CD4-positive, alpha-beta memory T cell (primary cell): ENCODE measurements at regions of chr1 and their contacts with region 1.

Region 1: GRCh38 chr1:183628537-183628936 is 7.0 kb downstream of the ARPC5 start:
- DNase-seq: no peak
- H3K4me3 ChIP-seq: no peak overlapping the region
- H3K4me3 Mint-ChIP-seq: peak overlapping the region in 5 of 8 donors; percentile 4 to 55 (median 27)
- H3K27ac ChIP-seq: no peak overlapping the region
- H3K27ac Mint-ChIP-seq: peak overlapping the region; percentile 31 to 89 (median 70)
- H3K4me1 ChIP-seq: peaks cover 65% of the 10 kb centered on the region
- H3K4me1 Mint-ChIP-seq: peaks cover 27 to 46% (median 36%) of the 10 kb centered on the region in 4 donors
- H3K27me3 ChIP-seq: no peaks in the 10 kb centered on the region
- H3K27me3 Mint-ChIP-seq: no peaks in the 10 kb centered on the region

Region 2: DNA sequence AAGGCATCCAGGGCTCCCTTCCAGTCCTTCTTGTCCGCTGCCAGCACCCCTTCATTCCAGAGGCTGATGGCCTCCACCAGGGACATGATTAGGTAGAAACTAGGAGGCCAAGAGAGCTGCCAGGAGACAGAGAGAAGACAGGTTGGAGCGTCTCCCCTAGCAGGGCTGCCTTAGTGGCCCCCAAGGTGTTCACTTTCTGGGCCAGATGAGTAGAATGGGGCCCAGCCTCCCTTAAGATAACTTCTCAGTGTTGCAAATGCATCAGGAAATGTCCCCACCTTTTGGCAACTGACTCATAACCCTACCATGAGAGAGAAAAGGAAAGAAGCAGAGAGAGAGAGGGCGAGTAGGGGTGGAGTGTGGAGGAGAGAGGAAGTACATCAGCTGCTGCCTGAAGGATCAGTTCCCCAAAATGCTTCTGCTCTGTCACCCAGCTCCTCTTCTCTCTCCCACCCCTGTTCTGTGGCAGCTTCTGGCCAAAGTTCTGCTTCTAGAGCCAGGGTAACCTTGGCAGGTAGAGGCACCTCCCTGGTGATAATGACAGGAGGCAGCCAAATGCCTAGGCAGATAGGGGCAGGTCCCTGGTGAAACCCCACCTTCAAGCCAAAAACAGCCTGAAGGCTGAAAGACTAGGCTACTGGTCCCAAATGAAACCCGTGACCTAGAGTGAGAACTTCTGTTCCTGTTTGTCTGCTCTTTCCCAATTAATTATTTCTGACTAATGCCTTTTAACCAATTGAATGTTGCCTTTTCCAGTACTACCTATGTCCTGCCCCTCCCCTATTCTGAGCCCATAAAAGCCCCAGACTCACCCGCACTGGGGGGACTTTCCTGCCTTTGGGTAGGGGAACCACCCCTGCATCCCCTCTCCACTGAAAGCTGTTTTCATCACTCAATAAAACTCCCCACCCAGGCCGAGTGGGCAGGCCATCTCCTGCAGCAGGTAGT is 38.0 kb before region 1 on chr1 and contains the start of gene NCF2:
- CTCF ChIA-PET with region 1: no interaction called
- POLR2A ChIA-PET with region 1: interaction called, 3 read pairs
- intact Hi-C with region 1: loop called (anchors 5 kb)
- DNase-seq: peak in 2 of 5 donors; percentile 7 to 37
- H3K4me3 ChIP-seq: no peak within 1 kb of the TSS
- H3K4me3 Mint-ChIP-seq: peak within 1 kb of the TSS in 6 of 8 donors; percentile 11 to 66 (median 54)
- H3K27ac ChIP-seq: peak within 1 kb of the TSS; percentile 50
- H3K27ac Mint-ChIP-seq: peak within 1 kb of the TSS; percentile 12 to 93 (median 72)
- H3K4me1 ChIP-seq: peaks cover 28% of the 10 kb centered on the region
- H3K4me1 Mint-ChIP-seq: peaks cover 20 to 31% (median 24%) of the 10 kb centered on the region in 4 donors
- H3K27me3 ChIP-seq: no peaks in the 10 kb centered on the region
- H3K27me3 Mint-ChIP-seq: peaks cover 4 to 7% of the 10 kb centered on the region in 2 donors
- total RNA-seq, gene NCF2: 5.2 to 6.7 TPM

Region 3: DNA sequence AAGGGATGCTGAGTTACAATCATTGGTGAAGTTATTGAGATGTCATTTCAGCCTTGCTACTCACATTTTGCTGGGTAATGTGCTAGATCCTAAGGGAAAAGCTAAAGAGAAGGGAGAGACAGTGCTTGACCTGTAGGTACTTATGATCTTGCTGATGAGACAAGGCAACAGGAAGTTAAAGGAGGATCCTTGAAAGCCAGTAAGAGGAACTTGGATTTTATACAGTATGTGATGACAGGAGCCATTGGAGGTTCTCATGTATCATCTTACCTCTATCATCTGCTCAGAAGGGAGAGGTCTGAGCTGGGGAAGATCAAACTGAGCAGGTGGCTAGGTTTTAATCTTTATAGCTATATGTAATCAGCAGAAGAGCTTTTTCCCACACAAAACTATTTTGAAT is 18.2 kb after region 1 on chr1:
- CTCF ChIA-PET with region 1: interaction called, 43 read pairs
- POLR2A ChIA-PET with region 1: no interaction called
- intact Hi-C with region 1: no loop called
- DNase-seq: no peak
- H3K4me3 ChIP-seq: no peak overlapping the region
- H3K4me3 Mint-ChIP-seq: no peak overlapping the region
- H3K27ac ChIP-seq: no peak overlapping the region
- H3K27ac Mint-ChIP-seq: no peak overlapping the region
- H3K4me1 ChIP-seq: peaks cover 8% of the 10 kb centered on the region
- H3K4me1 Mint-ChIP-seq: peaks cover 6 to 8% (median 8%) of the 10 kb centered on the region in 4 donors
- H3K27me3 ChIP-seq: no peaks in the 10 kb centered on the region
- H3K27me3 Mint-ChIP-seq: no peaks in the 10 kb centered on the region